ENCODE measurements at regions of chr19 and their contacts with region 1.

Region 1: DNA sequence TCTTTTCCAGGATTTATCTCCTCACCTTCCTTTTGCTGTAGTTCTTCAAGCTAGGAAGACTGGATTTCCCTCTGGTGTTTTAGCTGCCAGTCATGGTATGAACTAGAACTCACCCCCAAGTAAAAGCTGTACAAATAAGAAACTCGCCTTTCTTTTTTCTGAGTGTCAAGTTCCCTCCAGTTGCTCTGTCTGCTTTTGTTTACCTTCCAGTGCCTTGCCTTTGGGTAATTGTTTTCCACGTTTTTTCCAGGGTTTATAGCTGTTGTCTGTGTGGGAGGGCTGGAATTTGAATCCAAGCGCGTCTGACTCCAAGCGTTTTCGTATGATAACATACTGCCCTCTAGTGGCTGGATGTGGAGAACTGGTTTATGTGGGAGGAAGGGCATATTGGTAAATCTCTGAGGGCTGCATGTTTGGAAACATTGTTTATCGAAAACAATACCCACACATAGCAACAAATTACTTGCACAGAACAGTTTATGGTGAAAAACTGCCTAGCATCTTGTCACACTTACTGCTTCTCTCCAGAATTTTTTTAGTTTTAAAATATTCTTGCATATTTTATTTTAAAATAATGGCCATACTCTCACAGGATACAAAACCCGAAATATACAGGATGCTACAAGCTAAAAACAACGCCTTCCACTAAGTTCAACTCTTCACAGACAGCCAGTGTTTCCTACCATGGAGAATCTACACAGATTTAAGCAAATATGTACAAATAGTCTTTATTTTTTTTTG is 19.2 kb downstream of the RCN3 start:
- DNase-seq: peak; percentile 80
- H3K4me3 Mint-ChIP-seq: peak overlapping the region; percentile 29
- H3K27ac Mint-ChIP-seq: peak overlapping the region; percentile 13
- H3K4me1 Mint-ChIP-seq: no peaks in the 10 kb centered on the region
- H3K27me3 Mint-ChIP-seq: peaks cover 17% of the 10 kb centered on the region
- CTCF ChIP-seq: peak; percentile 87

Region 2: DNA sequence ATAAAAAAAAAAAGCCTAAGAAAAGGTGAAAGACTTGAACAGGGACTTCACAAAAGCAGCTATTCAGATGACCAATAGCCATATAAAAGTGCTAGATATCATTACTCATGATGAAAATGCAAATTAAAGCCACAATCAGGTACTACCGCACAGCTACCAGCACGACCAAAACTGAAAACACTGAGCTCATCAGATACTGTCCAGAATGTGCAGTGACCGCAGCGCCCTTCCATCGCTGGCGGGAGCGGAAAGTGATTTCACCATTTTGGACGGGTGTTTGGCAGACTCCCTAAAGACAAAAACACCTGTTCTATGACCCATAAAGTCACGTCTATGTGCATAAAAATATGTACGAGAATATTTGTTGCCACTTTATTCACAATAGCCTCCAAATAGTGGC is 282.7 kb before region 1 on chr19:
- CTCF ChIA-PET with region 1: no interaction called
- intact Hi-C with region 1: no loop called
- DNase-seq: no peak
- H3K4me3 Mint-ChIP-seq: no peak overlapping the region
- H3K27ac Mint-ChIP-seq: no peak overlapping the region
- H3K4me1 Mint-ChIP-seq: no peaks in the 10 kb centered on the region
- H3K27me3 Mint-ChIP-seq: peaks cover 7% of the 10 kb centered on the region
- CTCF ChIP-seq: no peak

Region 3: GRCh38 chr19:49340069-49340864 is 206.7 kb before region 1 on chr19:
- CTCF ChIA-PET with region 1: no interaction called
- intact Hi-C with region 1: no loop called
- DNase-seq: peak; percentile 67
- H3K4me3 Mint-ChIP-seq: peak overlapping the region; percentile 56
- H3K27ac Mint-ChIP-seq: no peak overlapping the region
- H3K4me1 Mint-ChIP-seq: peaks cover 10% of the 10 kb centered on the region
- H3K27me3 Mint-ChIP-seq: peaks cover 58% of the 10 kb centered on the region
- CTCF ChIP-seq: no peak

Region 4: GRCh38 chr19:49473868-49474544 is 73.0 kb before region 1 on chr19 and contains the start of gene FLT3LG:
- CTCF ChIA-PET with region 1: no interaction called
- intact Hi-C with region 1: no loop called
- DNase-seq: peak; percentile 86
- H3K4me3 Mint-ChIP-seq: peak within 1 kb of the TSS; percentile 71
- H3K27ac Mint-ChIP-seq: no peak within 1 kb of the TSS
- H3K4me1 Mint-ChIP-seq: peaks cover 3% of the 10 kb centered on the region
- H3K27me3 Mint-ChIP-seq: peaks cover 27% of the 10 kb centered on the region
- CTCF ChIP-seq: peak; percentile 98
- total RNA-seq, gene FLT3LG: 4.8 and 7.1 TPM in 2 replicates

Region 5: DNA sequence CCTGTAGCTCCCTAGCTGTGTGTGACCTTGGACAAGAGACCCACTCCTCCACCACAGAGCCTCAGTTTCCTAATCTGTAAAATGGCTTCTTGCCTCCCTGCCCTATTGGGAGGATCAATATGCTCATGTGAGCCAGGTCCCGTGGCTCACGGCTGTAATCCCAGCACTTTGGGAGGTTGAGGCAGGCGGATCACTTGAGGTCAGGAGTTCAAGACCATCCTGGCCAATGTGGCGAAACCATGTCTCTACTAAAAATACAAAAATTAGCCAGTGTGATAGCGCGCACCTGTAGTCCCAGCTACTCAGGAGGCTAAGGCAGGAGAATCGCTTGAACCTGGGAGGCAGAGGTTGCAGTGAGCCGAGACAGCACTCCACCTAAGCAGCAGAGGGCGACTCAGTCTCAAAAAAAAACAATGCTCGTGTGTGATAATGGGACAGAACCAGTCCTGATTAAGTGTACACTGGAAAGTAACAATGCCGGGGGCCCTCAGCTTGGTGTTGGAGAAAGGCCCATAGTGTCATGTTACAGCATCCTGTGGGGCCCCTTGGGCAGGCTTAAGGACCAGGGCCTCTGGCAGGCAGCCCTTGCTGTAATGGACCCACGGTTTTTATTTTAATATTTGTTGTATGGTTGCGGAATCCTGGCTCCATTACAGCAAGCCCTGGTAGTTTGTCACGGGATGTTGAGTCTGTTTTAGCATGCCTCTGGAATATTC is 44.0 kb before region 1 on chr19:
- CTCF ChIA-PET with region 1: interaction called, 25 read pairs
- intact Hi-C with region 1: loop called (anchors 1 kb)
- DNase-seq: peak; percentile 67
- H3K4me3 Mint-ChIP-seq: no peak overlapping the region
- H3K27ac Mint-ChIP-seq: no peak overlapping the region
- H3K4me1 Mint-ChIP-seq: peaks cover 11% of the 10 kb centered on the region
- H3K27me3 Mint-ChIP-seq: no peaks in the 10 kb centered on the region
- CTCF ChIP-seq: peak; percentile 55

Region 6: DNA sequence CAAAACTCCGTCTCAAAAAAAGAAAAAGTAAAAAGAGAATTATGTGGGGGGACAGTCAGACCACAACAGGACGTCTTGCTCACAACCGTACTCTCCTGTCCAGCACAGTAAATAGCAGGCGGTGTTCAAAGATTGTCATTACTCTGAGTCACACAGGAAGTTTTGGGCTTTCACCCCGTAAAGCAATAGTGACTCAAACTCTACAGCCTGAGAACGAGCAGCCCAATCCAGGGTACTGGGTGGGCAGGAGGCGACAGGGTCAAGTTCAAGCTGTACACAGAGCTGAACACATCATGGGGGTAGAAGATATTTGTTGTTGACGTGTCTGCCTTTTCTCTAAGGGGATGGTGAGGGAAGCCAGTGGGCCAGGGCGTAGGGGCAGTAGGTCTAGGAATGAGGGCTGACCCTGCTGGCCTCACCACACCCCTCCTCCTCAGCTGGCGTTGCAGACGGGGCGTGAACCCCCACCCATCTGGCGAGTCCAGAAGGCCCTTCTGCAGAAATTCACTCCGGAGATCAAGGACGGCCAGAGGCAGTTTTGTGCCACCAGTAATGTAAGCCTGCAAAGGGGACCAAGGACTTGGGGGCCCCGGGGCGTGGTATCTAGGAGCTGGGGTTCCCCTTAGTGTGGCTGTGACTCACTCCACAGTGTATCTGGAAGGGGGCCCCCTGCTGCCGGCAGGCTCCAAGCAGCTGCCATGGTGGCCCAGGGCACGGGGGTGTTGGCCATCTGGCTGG is 67.3 kb after region 1 on chr19:
- CTCF ChIA-PET with region 1: no interaction called
- intact Hi-C with region 1: no loop called
- DNase-seq: no peak
- H3K4me3 Mint-ChIP-seq: no peak overlapping the region
- H3K27ac Mint-ChIP-seq: no peak overlapping the region
- H3K4me1 Mint-ChIP-seq: peaks cover 15% of the 10 kb centered on the region
- H3K27me3 Mint-ChIP-seq: no peaks in the 10 kb centered on the region
- CTCF ChIP-seq: no peak